Posterior vena cava (tissue), 2 donors: ENCODE measurements at regions of chr3 and their contacts with region 1.

Region 1: GRCh38 chr3:160069986-160070385 is 81.4 kb downstream of the IL12A start:
- DNase-seq: no peak

Region 2: GRCh38 chr3:159724627-159725026 is 345.4 kb before region 1 on chr3:
- intact Hi-C with region 1: loop called in 1 of 2 experiments (anchors 5 kb)
- DNase-seq: no peak

Region 3: DNA sequence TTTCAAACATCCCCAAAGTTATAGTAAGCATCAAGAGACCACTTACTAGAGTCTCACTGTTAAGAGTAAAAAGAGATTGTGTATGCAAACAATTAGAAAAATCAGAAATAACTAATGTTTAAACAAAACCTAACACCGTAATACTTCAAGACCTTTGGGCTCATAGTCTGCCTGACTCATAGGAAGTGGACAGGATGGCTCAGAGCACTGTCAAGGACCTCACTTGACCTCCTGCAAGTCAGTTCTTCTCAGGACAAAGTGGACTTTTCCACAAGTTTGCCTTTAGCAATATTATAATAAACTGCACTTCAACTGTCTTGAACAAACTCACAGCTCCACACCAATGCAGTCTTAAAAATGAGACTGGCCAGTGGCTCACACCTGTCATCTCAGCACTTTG is 46.5 kb before region 1 on chr3:
- intact Hi-C with region 1: loop called in 1 of 2 experiments (anchors 1 kb)
- DNase-seq: no peak